H1 (cell line): ENCODE measurements at regions of chr10 and their contacts with region 1.

Region 1: DNA sequence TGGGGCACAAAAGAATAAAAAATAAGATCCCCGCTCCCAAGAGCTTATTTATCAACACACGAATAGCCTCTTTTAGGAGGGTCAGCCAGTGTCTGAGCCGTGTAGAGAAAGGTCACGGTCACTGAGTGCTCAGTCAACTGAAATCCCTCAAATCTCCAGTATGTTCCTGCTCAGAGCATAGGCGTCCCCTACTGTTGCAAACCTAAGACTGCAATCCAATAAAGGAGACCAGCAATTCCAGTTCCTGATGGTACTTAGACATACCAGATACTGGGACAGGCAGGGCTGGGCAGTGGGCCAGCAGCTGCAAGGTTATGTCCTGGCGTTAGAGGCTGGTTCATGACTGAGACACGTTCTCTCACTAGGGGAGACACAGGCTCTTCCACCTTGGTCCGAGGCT is 93.6 kb downstream of the CACNB2 start:
- DNase-seq: no peak
- H3K4me3 ChIP-seq: no peak overlapping the region
- H3K27ac ChIP-seq: no peak overlapping the region
- H3K4me1 ChIP-seq: peaks cover 0 to 11% (median 3%) of the 10 kb centered on the region in 4 experiments; a peak in 5 of 7 replicates
- H3K27me3 ChIP-seq: no peaks in the 10 kb centered on the region
- CTCF ChIP-seq: peak; percentile 10 to 79 (median 69)
- EP300 ChIP-seq: no peak
- POLR2A ChIP-seq: no peak
- RAD21 ChIP-seq: peak; percentile 75 to 79

Region 2: GRCh38 chr10:18214691-18215563 is 18.8 kb before region 1 on chr10:
- CTCF ChIA-PET with region 1: interaction called, 10 read pairs
- POLR2A ChIA-PET with region 1: interaction called, 4 read pairs
- DNase-seq: peak in 1 of 2 experiments; percentile 59
- H3K4me3 ChIP-seq: no peak overlapping the region
- H3K27ac ChIP-seq: no peak overlapping the region
- H3K4me1 ChIP-seq: no peaks in the 10 kb centered on the region
- H3K27me3 ChIP-seq: no peaks in the 10 kb centered on the region
- CTCF ChIP-seq: peak in 2 of 3 experiments; percentile 61 to 83; a peak in 3 of 4 replicates
- EP300 ChIP-seq: no peak
- POLR2A ChIP-seq: no peak
- RAD21 ChIP-seq: peak; percentile 89 to 90